B cell (primary cell): ENCODE measurements at regions of chr10 and their contacts with region 1.

Region 1: DNA sequence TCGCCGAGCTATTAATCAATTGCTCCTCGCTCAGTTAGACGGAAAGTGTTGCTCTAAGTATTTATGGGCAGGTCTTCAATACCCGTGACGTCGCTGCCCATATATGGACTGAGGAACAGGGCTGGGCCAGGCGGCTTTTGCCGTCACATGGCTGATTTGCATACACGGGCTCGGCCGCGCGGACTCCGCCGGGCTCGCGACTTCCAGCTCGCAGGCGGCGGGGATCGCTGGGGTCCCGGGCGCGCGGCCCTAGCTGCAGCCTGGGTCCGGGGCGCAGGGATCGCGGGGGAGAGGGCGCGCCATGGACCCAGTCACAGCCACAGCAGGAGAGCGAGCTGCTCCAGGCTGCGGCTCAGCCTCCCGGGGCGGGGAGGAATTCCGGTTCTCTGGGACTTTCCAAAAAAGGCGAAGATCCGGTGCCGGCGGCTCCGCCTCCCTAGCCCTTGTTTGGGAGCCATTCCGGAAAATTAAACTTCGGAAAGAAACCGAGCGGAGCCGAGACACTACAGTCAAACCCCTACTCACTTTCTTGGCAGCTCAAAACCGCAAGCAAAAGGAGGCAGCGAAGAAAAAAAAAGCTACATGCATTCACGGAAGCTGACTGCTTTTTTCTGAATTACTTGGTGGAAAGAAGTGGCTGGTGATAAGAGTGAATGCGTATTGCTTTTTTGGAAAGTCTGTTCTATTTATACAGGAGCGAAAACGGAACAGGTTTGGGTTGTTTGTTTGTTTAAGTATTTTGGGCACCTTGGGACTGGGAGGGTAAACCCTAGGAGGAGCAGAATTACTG is at the start of gene EGR2:
- DNase-seq: peak; percentile 98
- ATAC-seq: peak; percentile 74
- H3K4me3 ChIP-seq: peak within 1 kb of the TSS; percentile 66 to 88 (median 72)
- H3K4me3 Mint-ChIP-seq: peak within 1 kb of the TSS; percentile 100
- H3K27ac ChIP-seq: peak within 1 kb of the TSS; percentile 77 to 84
- H3K27ac Mint-ChIP-seq: peak within 1 kb of the TSS; percentile 99
- H3K4me1 ChIP-seq: peaks cover 33 to 42% of the 10 kb centered on the region in 2 donors
- H3K4me1 Mint-ChIP-seq: peaks cover 54% of the 10 kb centered on the region
- H3K27me3 ChIP-seq: peaks cover 0 to 37% (median 9%) of the 10 kb centered on the region in 4 experiments
- H3K27me3 Mint-ChIP-seq: peaks cover 7% of the 10 kb centered on the region
- CTCF ChIP-seq: no peak
- total RNA-seq, gene EGR2: 6.3 and 6.6 TPM in 2 replicates

Region 2: GRCh38 chr10:61903221-61903927 is 913.2 kb before region 1 on chr10:
- CTCF ChIA-PET with region 1: no interaction called
- POLR2A ChIA-PET with region 1: no interaction called
- intact Hi-C with region 1: loop called (anchors 5 kb)
- DNase-seq: peak; percentile 91
- ATAC-seq: peak; percentile 55
- H3K4me3 ChIP-seq: peak overlapping the region; percentile 69 to 98 (median 80)
- H3K4me3 Mint-ChIP-seq: peak overlapping the region; percentile 98
- H3K27ac ChIP-seq: peak overlapping the region; percentile 95 to 97
- H3K27ac Mint-ChIP-seq: peak overlapping the region; percentile 99
- H3K4me1 ChIP-seq: peaks cover 40 to 47% of the 10 kb centered on the region in 2 donors
- H3K4me1 Mint-ChIP-seq: peaks cover 49% of the 10 kb centered on the region
- H3K27me3 ChIP-seq: no peaks in the 10 kb centered on the region
- H3K27me3 Mint-ChIP-seq: no peaks in the 10 kb centered on the region
- CTCF ChIP-seq: peak; percentile 38

Region 3: GRCh38 chr10:62492012-62492869 is 324.3 kb before region 1 on chr10:
- CTCF ChIA-PET with region 1: interaction called, 51 read pairs
- POLR2A ChIA-PET with region 1: no interaction called
- intact Hi-C with region 1: loop called (anchors 1 kb)
- DNase-seq: peak; percentile 65
- ATAC-seq: peak; percentile 53
- H3K4me3 ChIP-seq: no peak overlapping the region
- H3K4me3 Mint-ChIP-seq: no peak overlapping the region
- H3K27ac ChIP-seq: no peak overlapping the region
- H3K27ac Mint-ChIP-seq: no peak overlapping the region
- H3K4me1 ChIP-seq: peaks cover 9 to 11% of the 10 kb centered on the region in 2 donors
- H3K4me1 Mint-ChIP-seq: peaks cover 26% of the 10 kb centered on the region
- H3K27me3 ChIP-seq: no peaks in the 10 kb centered on the region
- H3K27me3 Mint-ChIP-seq: no peaks in the 10 kb centered on the region
- CTCF ChIP-seq: peak; percentile 85

Region 4: DNA sequence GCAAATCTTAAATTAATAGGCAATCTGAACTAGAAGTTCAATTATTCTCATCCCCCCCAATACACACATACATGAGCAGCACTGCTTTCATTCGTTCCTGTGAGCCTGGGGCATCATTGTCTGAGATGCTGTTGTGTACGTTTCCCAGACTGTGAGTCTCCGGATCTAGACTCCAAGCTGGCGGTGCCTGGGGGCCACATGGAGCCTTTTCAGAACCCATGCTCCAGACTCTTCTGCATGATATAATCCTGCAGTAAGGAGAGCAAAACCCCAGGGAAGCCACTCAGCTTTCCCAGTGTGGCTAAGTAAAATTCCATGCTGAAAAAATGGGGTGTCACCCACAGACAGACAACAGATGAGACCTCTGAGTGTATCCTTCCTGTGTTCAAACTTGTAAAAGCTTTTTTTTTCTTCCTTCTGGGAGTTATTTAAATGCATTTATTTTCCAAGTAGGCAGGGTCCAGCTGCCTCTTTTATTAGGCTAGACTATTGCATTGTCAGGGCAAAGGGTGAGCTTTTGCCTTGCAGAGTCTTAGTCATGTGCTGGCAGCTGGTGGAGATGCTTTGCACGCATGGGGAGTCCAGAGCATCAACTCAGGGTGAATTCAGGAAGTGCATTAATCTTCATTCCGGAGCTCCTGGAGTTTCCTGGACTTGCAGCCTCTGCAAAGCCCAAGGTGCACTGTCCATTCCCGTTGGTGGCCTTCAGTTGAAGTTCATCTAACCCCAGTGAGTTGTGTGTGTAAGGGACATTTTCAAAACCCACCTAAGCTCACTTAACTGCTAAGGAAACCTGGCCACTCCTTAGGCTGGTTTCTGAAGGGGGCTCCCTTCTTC is 197.7 kb before region 1 on chr10:
- CTCF ChIA-PET with region 1: interaction called, 204 read pairs
- POLR2A ChIA-PET with region 1: interaction called, 3 read pairs
- intact Hi-C with region 1: no loop called
- DNase-seq: peak; percentile 39
- ATAC-seq: peak; percentile 58
- H3K4me3 ChIP-seq: no peak overlapping the region
- H3K4me3 Mint-ChIP-seq: no peak overlapping the region
- H3K27ac ChIP-seq: no peak overlapping the region
- H3K27ac Mint-ChIP-seq: no peak overlapping the region
- H3K4me1 ChIP-seq: peaks cover 15 to 20% of the 10 kb centered on the region in 2 donors
- H3K4me1 Mint-ChIP-seq: peaks cover 33% of the 10 kb centered on the region
- H3K27me3 ChIP-seq: no peaks in the 10 kb centered on the region
- H3K27me3 Mint-ChIP-seq: no peaks in the 10 kb centered on the region
- CTCF ChIP-seq: no peak

Region 5: GRCh38 chr10:62696798-62697197 is 119.7 kb before region 1 on chr10:
- CTCF ChIA-PET with region 1: no interaction called
- POLR2A ChIA-PET with region 1: no interaction called
- intact Hi-C with region 1: loop called (anchors 5 kb)
- DNase-seq: peak; percentile 46
- ATAC-seq: peak; percentile 57
- H3K4me3 ChIP-seq: no peak overlapping the region
- H3K4me3 Mint-ChIP-seq: no peak overlapping the region
- H3K27ac ChIP-seq: no peak overlapping the region
- H3K27ac Mint-ChIP-seq: peak overlapping the region; percentile 11
- H3K4me1 ChIP-seq: peaks cover 12 to 13% of the 10 kb centered on the region in 2 donors
- H3K4me1 Mint-ChIP-seq: peaks cover 12% of the 10 kb centered on the region
- H3K27me3 ChIP-seq: no peaks in the 10 kb centered on the region
- H3K27me3 Mint-ChIP-seq: no peaks in the 10 kb centered on the region
- CTCF ChIP-seq: no peak

Region 6: GRCh38 chr10:62895058-62895457 is 78.5 kb after region 1 on chr10:
- CTCF ChIA-PET with region 1: no interaction called
- POLR2A ChIA-PET with region 1: no interaction called
- intact Hi-C with region 1: no loop called
- DNase-seq: no peak
- ATAC-seq: no peak
- H3K4me3 ChIP-seq: no peak overlapping the region
- H3K4me3 Mint-ChIP-seq: no peak overlapping the region
- H3K27ac ChIP-seq: no peak overlapping the region
- H3K27ac Mint-ChIP-seq: no peak overlapping the region
- H3K4me1 ChIP-seq: no peaks in the 10 kb centered on the region
- H3K4me1 Mint-ChIP-seq: no peaks in the 10 kb centered on the region
- H3K27me3 ChIP-seq: no peaks in the 10 kb centered on the region
- H3K27me3 Mint-ChIP-seq: peaks cover 8% of the 10 kb centered on the region
- CTCF ChIP-seq: no peak

Region 7: DNA sequence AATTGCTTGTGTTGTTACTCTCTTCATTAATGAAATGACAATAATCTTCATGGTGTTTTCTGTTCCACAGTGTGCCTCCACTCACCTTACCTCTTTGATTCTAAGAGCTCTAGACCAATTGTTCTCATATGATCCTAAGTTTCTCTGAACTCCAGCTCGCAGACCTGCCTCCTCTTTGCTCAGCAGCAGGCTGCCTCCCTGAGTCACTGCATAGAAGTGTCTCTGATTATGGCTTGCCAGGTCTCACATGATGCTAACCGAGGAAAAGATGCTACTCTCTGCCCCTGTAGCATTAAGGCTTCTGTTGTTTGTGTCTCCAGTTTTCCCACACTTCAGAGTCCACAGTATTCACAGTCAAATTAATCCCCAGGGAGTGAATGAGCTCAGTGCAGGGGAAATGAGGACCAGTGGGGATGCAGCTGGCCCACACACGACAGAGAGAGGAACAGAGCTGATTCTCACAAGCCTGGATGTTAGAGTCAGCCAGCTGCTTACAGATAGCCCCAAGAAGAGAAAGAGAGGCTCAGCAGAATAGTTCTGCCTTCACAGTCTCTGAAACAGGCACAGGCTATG is 145.5 kb after region 1 on chr10:
- CTCF ChIA-PET with region 1: no interaction called
- POLR2A ChIA-PET with region 1: no interaction called
- intact Hi-C with region 1: no loop called
- DNase-seq: no peak
- ATAC-seq: no peak
- H3K4me3 ChIP-seq: no peak overlapping the region
- H3K4me3 Mint-ChIP-seq: no peak overlapping the region
- H3K27ac ChIP-seq: no peak overlapping the region
- H3K27ac Mint-ChIP-seq: no peak overlapping the region
- H3K4me1 ChIP-seq: no peaks in the 10 kb centered on the region
- H3K4me1 Mint-ChIP-seq: no peaks in the 10 kb centered on the region
- H3K27me3 ChIP-seq: peaks cover 0 to 4% (median 2%) of the 10 kb centered on the region in 4 experiments
- H3K27me3 Mint-ChIP-seq: peaks cover 18% of the 10 kb centered on the region
- CTCF ChIP-seq: no peak

Region 8: DNA sequence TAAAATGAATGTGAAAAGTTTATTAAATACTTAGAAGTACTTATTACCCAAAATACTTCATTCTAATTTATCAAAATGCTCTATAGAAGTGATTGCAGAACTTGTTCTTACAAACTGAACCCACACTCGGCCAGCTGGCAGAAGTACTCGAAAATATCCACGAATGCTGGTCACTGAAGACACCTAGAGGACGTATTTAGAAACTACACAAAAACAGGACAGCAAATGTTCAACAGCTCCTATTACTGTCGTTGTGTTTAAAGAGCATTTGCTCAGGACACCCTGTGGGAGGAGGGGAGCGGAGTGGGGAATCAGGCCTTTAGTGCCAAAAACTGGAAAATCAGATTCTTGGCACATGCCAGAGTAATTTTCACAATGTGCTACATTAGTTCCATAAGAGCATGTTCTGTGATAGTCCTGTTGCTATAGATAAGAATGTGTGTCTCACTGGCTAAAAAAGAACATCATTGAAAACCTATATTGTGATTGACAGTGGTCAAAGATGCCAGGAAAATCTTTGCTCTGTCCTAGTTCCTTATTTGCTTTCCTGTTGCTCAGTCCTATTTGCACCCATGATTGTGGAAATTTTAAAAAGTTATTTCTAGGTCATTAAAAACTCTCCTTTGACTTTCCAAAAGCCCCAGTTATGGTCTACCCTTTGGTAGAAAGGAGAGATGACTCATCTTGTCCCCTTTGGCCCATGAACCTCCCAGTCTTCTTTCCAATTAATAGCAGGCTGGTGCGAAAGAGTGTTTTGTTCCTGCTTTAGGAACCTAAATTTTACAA is 267.6 kb after region 1 on chr10:
- CTCF ChIA-PET with region 1: interaction called, 12 read pairs
- POLR2A ChIA-PET with region 1: no interaction called
- intact Hi-C with region 1: loop called (anchors 2 kb)
- DNase-seq: peak; percentile 75
- ATAC-seq: peak; percentile 86
- H3K4me3 ChIP-seq: no peak overlapping the region
- H3K4me3 Mint-ChIP-seq: no peak overlapping the region
- H3K27ac ChIP-seq: no peak overlapping the region
- H3K27ac Mint-ChIP-seq: no peak overlapping the region
- H3K4me1 ChIP-seq: no peaks in the 10 kb centered on the region
- H3K4me1 Mint-ChIP-seq: no peaks in the 10 kb centered on the region
- H3K27me3 ChIP-seq: no peaks in the 10 kb centered on the region
- H3K27me3 Mint-ChIP-seq: peaks cover 10% of the 10 kb centered on the region
- CTCF ChIP-seq: peak; percentile 82

Region 9: GRCh38 chr10:63409465-63410027 is 593.0 kb after region 1 on chr10:
- CTCF ChIA-PET with region 1: no interaction called
- POLR2A ChIA-PET with region 1: no interaction called
- intact Hi-C with region 1: no loop called
- DNase-seq: no peak
- ATAC-seq: no peak
- H3K4me3 ChIP-seq: no peak overlapping the region
- H3K4me3 Mint-ChIP-seq: no peak overlapping the region
- H3K27ac ChIP-seq: no peak overlapping the region
- H3K27ac Mint-ChIP-seq: no peak overlapping the region
- H3K4me1 ChIP-seq: peaks cover 6 to 10% of the 10 kb centered on the region in 2 donors
- H3K4me1 Mint-ChIP-seq: peaks cover 18% of the 10 kb centered on the region
- H3K27me3 ChIP-seq: no peaks in the 10 kb centered on the region
- H3K27me3 Mint-ChIP-seq: no peaks in the 10 kb centered on the region
- CTCF ChIP-seq: no peak

Region 10: DNA sequence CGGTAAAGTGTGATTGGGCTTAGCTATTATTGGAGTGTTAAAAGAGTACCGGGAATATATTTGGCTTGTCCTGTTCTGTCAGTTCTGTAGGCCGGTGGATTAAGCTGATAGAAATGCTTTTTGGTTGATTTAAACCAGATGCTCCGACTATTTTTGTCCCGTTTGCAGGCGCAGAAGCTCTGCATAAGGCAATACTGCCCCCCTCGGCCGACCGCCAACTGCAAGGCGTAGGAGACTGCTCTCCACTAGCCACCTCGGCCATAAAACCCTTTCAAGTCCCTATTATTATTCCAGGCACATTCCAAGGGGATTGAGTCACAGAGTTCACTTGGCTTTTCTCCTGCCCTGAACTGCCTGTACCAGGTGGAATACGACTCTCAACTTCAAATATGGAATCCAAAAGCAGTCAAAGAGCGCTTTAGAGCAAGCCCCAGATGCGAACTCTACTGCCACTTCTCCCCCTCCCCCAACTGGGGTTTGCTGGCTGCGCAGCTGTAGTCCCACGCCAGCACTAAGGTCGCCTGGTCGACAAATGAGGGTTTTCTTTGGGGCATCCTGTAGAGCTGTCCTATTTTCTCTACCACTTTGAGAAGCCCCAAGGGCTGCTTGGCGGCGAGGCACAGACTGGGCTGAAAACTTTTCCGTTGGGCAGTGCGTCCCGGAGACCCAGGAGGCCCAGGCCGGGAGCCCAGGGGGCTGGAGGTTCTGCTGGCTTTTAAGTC is 813.0 kb after region 1 on chr10:
- CTCF ChIA-PET with region 1: interaction called, 3 read pairs
- POLR2A ChIA-PET with region 1: no interaction called
- intact Hi-C with region 1: loop called (anchors 1 kb)
- DNase-seq: peak; percentile 89
- ATAC-seq: peak; percentile 56
- H3K4me3 ChIP-seq: peak overlapping the region; percentile 65 to 88 (median 81)
- H3K4me3 Mint-ChIP-seq: peak overlapping the region; percentile 97
- H3K27ac ChIP-seq: peak overlapping the region; percentile 61 to 66
- H3K27ac Mint-ChIP-seq: peak overlapping the region; percentile 96
- H3K4me1 ChIP-seq: peaks cover 17 to 28% of the 10 kb centered on the region in 2 donors
- H3K4me1 Mint-ChIP-seq: peaks cover 24% of the 10 kb centered on the region
- H3K27me3 ChIP-seq: no peaks in the 10 kb centered on the region
- H3K27me3 Mint-ChIP-seq: no peaks in the 10 kb centered on the region
- CTCF ChIP-seq: peak; percentile 90